Activated T-helper 2 cell treated with anti-CD3 and anti-CD28 coated beads, Interferon-gamma antibody, Interleukin-2, Interleukin-4, amounts not matched to agents 10 μg/mL and 5 μg/mL and 100 μg/mL, durations not matched to agents 14 hours and 24 hours and 36 hours (primary cell): ENCODE measurements at regions of chr2 and their contacts with region 1.

Region 1: DNA sequence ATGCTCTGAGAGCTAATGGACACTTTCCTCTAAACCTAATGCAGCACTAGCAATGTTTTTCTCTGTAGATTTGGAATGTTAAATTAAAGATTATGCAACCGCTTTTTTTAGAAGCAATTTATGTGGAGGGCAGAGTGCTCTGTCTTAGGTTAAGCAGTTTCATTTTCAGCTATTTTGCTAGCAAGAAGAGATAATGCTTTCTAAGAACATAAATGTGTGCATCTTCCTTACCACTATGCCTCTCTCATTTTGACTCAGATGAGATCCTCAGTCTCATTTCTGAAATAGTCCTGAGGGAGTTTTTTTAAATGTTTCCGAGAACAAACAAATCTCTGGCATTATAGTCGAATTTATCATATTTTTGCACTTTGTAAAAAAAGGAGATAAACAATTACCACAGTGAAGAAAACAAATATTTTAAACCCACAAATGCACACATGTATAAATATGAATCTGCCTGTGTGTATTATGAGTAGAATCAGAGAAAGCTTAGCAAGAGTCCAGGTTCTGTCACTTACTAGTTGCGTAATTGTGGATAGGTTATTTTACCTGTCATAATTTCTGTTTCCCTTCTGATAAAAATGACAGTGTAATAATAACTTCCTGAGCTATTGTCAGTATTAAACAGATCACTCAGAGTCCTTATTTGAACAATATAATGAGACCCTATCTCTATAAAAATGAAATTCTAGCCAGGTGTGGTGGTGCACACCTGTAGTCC is 207.7 kb upstream of the CRIM1 start:
- DNase-seq: no peak
- H3K4me3 Mint-ChIP-seq: no peak overlapping the region
- H3K27ac Mint-ChIP-seq: no peak overlapping the region
- H3K4me1 Mint-ChIP-seq: peaks cover 27% of the 10 kb centered on the region
- H3K27me3 Mint-ChIP-seq: peaks cover 39% of the 10 kb centered on the region

Region 2: GRCh38 chr2:35973132-35973736 is 174.6 kb before region 1 on chr2:
- intact Hi-C with region 1: loop called (anchors 2 kb)
- DNase-seq: no peak
- H3K4me3 Mint-ChIP-seq: no peak overlapping the region
- H3K27ac Mint-ChIP-seq: no peak overlapping the region
- H3K4me1 Mint-ChIP-seq: peaks cover 3% of the 10 kb centered on the region
- H3K27me3 Mint-ChIP-seq: peaks cover 12% of the 10 kb centered on the region

Region 3: DNA sequence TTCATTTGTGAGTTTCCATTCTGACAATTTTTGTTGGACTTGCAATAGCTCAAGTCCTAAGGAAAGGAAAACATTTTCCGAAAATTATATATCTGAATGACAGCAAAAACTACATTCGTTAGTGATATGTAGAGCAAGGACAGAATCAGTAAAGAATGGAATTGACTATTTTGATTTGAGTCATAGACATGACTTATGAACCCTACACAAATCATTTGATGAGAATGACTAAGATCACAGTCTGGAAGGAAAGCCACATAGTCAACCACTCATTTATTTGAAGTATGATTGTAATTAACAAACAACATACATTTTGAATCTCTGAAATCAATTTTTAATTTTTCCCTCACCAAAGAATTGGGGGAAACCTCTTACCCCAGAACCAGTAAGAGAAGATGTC is 23.8 kb before region 1 on chr2:
- intact Hi-C with region 1: loop called (anchors 1 kb)
- DNase-seq: no peak
- H3K4me3 Mint-ChIP-seq: no peak overlapping the region
- H3K27ac Mint-ChIP-seq: no peak overlapping the region
- H3K4me1 Mint-ChIP-seq: no peaks in the 10 kb centered on the region
- H3K27me3 Mint-ChIP-seq: peaks cover 24% of the 10 kb centered on the region

Region 4: GRCh38 chr2:36307441-36307840 is 159.6 kb after region 1 on chr2:
- intact Hi-C with region 1: loop called (anchors 1 kb)
- DNase-seq: no peak
- H3K4me3 Mint-ChIP-seq: no peak overlapping the region
- H3K27ac Mint-ChIP-seq: no peak overlapping the region
- H3K4me1 Mint-ChIP-seq: peaks cover 21% of the 10 kb centered on the region
- H3K27me3 Mint-ChIP-seq: peaks cover 5% of the 10 kb centered on the region